B cell (primary cell): ENCODE measurements at regions of chr1 and their contacts with region 1.

Region 1: DNA sequence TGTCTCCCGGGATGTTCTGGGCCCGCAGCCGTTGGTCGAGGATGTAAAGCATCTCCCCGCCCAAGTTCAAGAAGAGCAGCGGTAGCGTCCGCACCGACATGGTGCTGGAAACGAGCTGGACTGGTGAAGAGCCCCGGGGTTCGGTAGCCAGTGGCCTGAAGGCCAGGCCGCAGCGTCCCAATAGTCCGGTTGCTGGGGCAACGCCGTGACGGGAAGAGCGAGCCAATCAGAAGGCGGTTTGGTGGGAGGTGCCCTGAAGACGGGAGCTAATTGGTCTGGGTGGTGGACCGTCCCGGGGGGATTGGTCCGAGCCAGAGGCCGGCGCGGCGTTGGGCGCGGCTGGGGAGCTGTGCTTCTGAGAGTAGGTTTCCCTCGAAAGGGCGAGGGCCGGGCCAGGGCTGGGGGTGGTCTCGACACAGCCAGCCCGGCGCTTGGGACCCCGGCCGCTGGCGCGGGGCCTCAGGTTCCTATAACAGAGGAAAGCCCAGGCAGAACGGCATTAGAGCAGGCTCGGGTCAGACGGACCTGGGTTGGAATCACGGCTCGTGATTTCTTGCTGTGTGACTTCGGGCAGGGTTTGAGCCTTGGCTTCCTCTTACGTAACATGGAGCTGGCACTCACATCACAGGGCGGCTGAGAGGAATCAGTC is at the start of gene OSCP1:
- DNase-seq: peak; percentile 96
- ATAC-seq: peak; percentile 98
- H3K4me3 ChIP-seq: peak within 1 kb of the TSS; percentile 67 to 86 (median 76)
- H3K4me3 Mint-ChIP-seq: peak within 1 kb of the TSS; percentile 97
- H3K27ac ChIP-seq: peak within 1 kb of the TSS; percentile 92 to 96
- H3K27ac Mint-ChIP-seq: peak within 1 kb of the TSS; percentile 96
- H3K4me1 ChIP-seq: peaks cover 3 to 15% of the 10 kb centered on the region in 2 donors
- H3K4me1 Mint-ChIP-seq: peaks cover 18% of the 10 kb centered on the region
- H3K27me3 ChIP-seq: no peaks in the 10 kb centered on the region
- H3K27me3 Mint-ChIP-seq: no peaks in the 10 kb centered on the region
- CTCF ChIP-seq: no peak
- total RNA-seq, gene OSCP1: 0.56 and 0.94 TPM in 2 replicates

Region 2: DNA sequence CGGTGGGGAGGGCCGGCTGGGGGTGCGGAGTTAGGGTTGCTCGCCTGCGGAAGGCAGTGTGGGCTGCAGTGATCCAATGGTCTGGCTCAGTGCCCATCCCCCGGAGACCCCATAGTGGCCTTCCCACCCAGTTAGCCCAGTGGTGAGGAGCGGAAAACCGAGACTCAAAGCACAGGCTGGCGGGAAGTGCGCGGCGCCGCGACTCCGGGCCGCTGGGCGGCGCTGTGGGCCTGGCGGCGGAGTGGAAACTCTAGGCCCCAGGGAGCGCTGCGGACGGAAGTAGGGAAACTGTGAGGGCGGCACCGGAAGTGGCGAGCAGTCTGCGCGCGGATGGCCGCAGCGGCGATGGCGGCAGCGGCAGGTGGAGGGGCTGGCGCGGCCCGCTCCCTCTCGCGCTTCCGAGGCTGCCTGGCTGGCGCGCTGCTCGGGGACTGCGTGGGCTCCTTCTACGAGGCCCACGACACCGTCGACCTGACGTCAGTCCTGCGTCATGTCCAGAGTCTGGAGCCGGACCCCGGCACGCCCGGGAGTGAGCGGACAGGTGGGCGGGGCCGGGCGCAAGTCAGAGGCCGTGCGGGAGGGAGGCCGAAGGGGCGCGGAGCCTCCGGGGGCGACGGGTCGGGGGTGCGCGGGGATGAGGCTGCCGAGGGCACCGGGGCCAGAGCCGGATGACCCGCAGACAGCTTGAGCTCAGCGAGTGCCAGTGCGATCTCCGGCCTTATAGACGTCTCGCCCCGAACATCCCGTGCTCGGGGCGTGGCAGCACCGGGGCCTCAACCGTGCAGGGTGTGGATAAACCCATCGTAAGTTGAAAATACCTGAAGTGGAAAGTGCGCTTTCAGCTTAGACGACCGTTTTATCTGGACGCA is 361.6 kb before region 1 on chr1 and contains the start of gene ADPRS:
- CTCF ChIA-PET with region 1: no interaction called
- POLR2A ChIA-PET with region 1: no interaction called
- intact Hi-C with region 1: loop called (anchors 1 kb)
- DNase-seq: peak; percentile 95
- ATAC-seq: peak; percentile 88
- H3K4me3 ChIP-seq: peak within 1 kb of the TSS; percentile 79 to 98 (median 84)
- H3K4me3 Mint-ChIP-seq: peak within 1 kb of the TSS; percentile 97
- H3K27ac ChIP-seq: peak within 1 kb of the TSS; percentile 78 to 92
- H3K27ac Mint-ChIP-seq: peak within 1 kb of the TSS; percentile 94
- H3K4me1 ChIP-seq: peaks cover 22 to 28% of the 10 kb centered on the region in 2 donors
- H3K4me1 Mint-ChIP-seq: peaks cover 22% of the 10 kb centered on the region
- H3K27me3 ChIP-seq: peaks cover 0 to 18% (median 9%) of the 10 kb centered on the region in 4 experiments
- H3K27me3 Mint-ChIP-seq: peaks cover 16% of the 10 kb centered on the region
- CTCF ChIP-seq: peak; percentile 97
- total RNA-seq, gene ADPRS: 20.9 and 24.0 TPM in 2 replicates

Region 3: GRCh38 chr1:36239941-36240637 is 210.3 kb before region 1 on chr1:
- CTCF ChIA-PET with region 1: no interaction called
- POLR2A ChIA-PET with region 1: interaction called, 11 read pairs
- intact Hi-C with region 1: no loop called
- DNase-seq: no peak
- ATAC-seq: no peak
- H3K4me3 ChIP-seq: no peak overlapping the region
- H3K4me3 Mint-ChIP-seq: no peak overlapping the region
- H3K27ac ChIP-seq: peak overlapping the region in 1 of 2 donors; percentile 9
- H3K27ac Mint-ChIP-seq: no peak overlapping the region
- H3K4me1 ChIP-seq: peaks cover 19 to 21% of the 10 kb centered on the region in 2 donors
- H3K4me1 Mint-ChIP-seq: peaks cover 43% of the 10 kb centered on the region
- H3K27me3 ChIP-seq: no peaks in the 10 kb centered on the region
- H3K27me3 Mint-ChIP-seq: no peaks in the 10 kb centered on the region
- CTCF ChIP-seq: no peak

Region 4: DNA sequence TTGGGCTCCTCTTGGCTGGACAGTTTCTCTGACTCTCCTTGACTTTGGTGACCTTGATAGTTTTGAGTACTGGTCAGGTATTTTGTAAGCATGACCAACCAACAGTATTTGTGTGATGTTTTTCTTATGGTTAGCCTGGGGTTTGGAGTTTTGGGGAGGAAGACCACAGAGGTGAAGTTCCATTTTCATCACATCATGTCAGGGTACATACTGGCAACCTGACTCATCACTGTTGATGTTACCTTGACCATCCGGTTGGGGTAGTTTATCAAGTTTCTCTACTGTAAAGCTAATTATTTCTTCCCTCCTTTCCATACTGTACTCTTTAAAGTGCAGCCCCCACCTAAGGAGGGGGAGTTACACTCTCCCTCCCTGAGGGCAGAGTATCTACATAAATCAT is 13.6 kb before region 1 on chr1:
- CTCF ChIA-PET with region 1: no interaction called
- POLR2A ChIA-PET with region 1: no interaction called
- intact Hi-C with region 1: no loop called
- DNase-seq: no peak
- ATAC-seq: no peak
- H3K4me3 ChIP-seq: no peak overlapping the region
- H3K4me3 Mint-ChIP-seq: no peak overlapping the region
- H3K27ac ChIP-seq: no peak overlapping the region
- H3K27ac Mint-ChIP-seq: no peak overlapping the region
- H3K4me1 ChIP-seq: no peaks in the 10 kb centered on the region
- H3K4me1 Mint-ChIP-seq: no peaks in the 10 kb centered on the region
- H3K27me3 ChIP-seq: no peaks in the 10 kb centered on the region
- H3K27me3 Mint-ChIP-seq: no peaks in the 10 kb centered on the region
- CTCF ChIP-seq: no peak

Region 5: GRCh38 chr1:36463803-36464604 is 13.6 kb after region 1 on chr1 and contains the start of gene MRPS15:
- CTCF ChIA-PET with region 1: interaction called, 5 read pairs
- POLR2A ChIA-PET with region 1: interaction called, 20 read pairs
- intact Hi-C with region 1: loop called (anchors 1 kb)
- DNase-seq: peak; percentile 97
- ATAC-seq: peak; percentile 98
- H3K4me3 ChIP-seq: peak within 1 kb of the TSS; percentile 75 to 96 (median 89)
- H3K4me3 Mint-ChIP-seq: peak within 1 kb of the TSS; percentile 92
- H3K27ac ChIP-seq: peak within 1 kb of the TSS; percentile 87 to 99
- H3K27ac Mint-ChIP-seq: peak within 1 kb of the TSS; percentile 98
- H3K4me1 ChIP-seq: peaks cover 11 to 17% of the 10 kb centered on the region in 2 donors
- H3K4me1 Mint-ChIP-seq: peaks cover 27% of the 10 kb centered on the region
- H3K27me3 ChIP-seq: no peaks in the 10 kb centered on the region
- H3K27me3 Mint-ChIP-seq: no peaks in the 10 kb centered on the region
- CTCF ChIP-seq: no peak
- total RNA-seq, gene MRPS15: 34.4 and 34.8 TPM in 2 replicates

Region 6: DNA sequence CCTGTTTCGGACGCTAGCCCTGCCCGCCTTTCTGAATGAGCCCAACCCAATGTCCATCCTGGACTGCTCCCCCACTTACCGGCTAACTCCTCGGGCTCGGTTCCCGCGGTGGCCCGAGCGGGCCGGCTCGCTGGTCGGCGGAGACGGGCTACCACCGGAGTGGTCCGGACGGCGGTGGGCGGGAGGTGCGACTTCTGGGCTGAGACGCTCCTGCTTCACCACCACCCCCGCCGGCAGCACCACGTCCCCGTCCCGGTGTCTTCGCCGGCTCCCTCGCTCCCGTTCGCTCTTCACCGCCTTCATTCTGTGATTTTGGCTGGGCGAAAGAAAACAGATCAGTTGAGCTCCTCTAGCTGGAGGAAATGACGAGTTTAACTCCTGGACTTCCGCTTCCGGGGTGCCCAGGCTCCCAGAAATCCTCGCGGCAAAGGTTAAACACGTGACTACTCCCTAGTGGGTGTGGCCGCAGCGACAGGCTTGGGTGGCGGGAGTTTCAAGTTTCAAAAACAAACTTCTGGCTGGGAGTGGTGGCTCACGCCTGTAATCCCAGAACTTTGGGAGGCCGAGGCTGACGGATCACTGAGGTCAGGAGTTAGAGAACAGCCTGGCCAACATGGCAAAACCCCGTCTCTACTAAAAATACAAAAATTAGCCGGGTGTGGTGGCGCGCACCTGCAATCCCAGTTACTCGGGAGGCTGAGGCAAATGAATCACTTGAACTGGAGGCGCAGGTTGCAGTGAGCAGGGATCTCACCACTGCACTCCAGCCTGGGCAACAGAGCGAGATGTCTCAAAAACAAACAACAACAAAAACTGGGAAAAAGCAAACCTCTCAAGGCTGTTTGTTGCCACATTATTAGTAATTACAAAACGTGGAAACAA is 1103.8 kb after region 1 on chr1 and contains the start of gene SNIP1:
- CTCF ChIA-PET with region 1: no interaction called
- POLR2A ChIA-PET with region 1: no interaction called
- intact Hi-C with region 1: loop called (anchors 2 kb)
- DNase-seq: peak; percentile 94
- ATAC-seq: peak; percentile 98
- H3K4me3 ChIP-seq: peak within 1 kb of the TSS; percentile 75 to 99 (median 93)
- H3K4me3 Mint-ChIP-seq: peak within 1 kb of the TSS; percentile 98
- H3K27ac ChIP-seq: peak within 1 kb of the TSS; percentile 82 to 96
- H3K27ac Mint-ChIP-seq: peak within 1 kb of the TSS; percentile 97
- H3K4me1 ChIP-seq: peaks cover 13 to 19% of the 10 kb centered on the region in 2 donors
- H3K4me1 Mint-ChIP-seq: peaks cover 33% of the 10 kb centered on the region
- H3K27me3 ChIP-seq: peaks cover 0 to 3% (median 0%) of the 10 kb centered on the region in 4 experiments
- H3K27me3 Mint-ChIP-seq: peaks cover 5% of the 10 kb centered on the region
- CTCF ChIP-seq: no peak
- total RNA-seq, gene SNIP1: 45.0 and 45.1 TPM in 2 replicates